Posterior cingulate gyrus (tissue), 11 donors: ENCODE measurements at regions of chr16 and their contacts with region 1.

Region 1: GRCh38 chr16:65601781-65602180 is 479.9 kb upstream of the CDH11 start:
- DNase-seq: no peak

Region 2: DNA sequence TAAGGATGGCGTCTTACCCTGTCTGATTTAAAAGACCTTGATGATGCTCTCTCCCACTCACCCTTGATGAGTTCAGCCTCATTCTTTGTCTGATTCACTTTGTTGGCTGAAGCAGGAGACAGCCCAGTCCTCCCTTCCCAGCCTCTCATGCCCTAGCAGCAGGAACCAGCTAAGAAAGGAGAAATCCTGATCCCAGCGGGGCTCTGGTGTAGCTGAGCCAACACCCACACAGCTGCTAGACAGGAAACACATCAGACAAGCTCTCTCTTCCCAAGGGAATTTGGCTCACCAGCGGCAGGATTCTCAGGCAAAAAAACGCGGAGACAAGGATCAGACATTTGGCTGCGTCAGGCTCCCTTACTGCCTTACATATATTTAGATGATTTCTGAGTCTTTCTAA is 691.4 kb before region 1 on chr16:
- intact Hi-C with region 1: loop called (anchors 10 kb)
- DNase-seq: peak in 7 of 10 donors; percentile 18 to 89 (median 34)

Region 3: GRCh38 chr16:65559846-65560245 is 41.9 kb before region 1 on chr16:
- intact Hi-C with region 1: no loop called
- DNase-seq: no peak

Region 4: DNA sequence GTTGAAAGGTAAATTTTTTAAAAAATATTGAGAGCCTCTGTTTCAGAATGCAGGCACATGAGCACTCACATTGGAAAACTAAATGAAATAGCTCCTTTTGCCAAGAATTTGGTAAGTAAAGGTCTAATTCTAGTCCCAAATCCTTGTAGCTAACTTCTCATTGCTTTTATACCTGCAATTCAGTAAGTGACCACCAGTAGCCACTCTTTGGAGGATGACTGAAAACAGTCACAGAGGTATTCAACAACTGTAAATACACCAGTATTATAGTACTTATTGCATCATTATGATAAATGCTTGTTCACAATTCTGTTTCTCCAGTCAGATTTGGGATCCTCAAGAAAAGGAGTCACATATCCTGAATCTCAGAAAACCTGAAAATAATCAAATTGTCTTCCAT is 82.4 kb after region 1 on chr16:
- intact Hi-C with region 1: no loop called
- DNase-seq: no peak